ENCODE measurements at regions of chr14 and their contacts with region 1.

Region 1: GRCh38 chr14:88168498-88169165 is 154.4 kb downstream of the KCNK10 start:
- DNase-seq: peak in 3 of 6 donors; percentile 11 to 54 (median 31)
- ATAC-seq: peak; percentile 69 to 95 (median 90)
- H3K4me3 ChIP-seq: no peak overlapping the region
- H3K27ac ChIP-seq: no peak overlapping the region
- H3K4me1 ChIP-seq: no peaks in the 10 kb centered on the region
- H3K27me3 ChIP-seq: no peaks in the 10 kb centered on the region
- CTCF ChIP-seq: peak; percentile 46 to 65 (median 53)

Region 2: GRCh38 chr14:87944987-87945604 is 223.5 kb before region 1 on chr14:
- intact Hi-C with region 1: loop called in 1 of 3 experiments (anchors 10 kb)
- DNase-seq: no peak
- ATAC-seq: peak in 3 of 4 donors; percentile 69 to 82 (median 77)
- H3K4me3 ChIP-seq: no peak overlapping the region
- H3K27ac ChIP-seq: no peak overlapping the region
- H3K4me1 ChIP-seq: no peaks in the 10 kb centered on the region
- H3K27me3 ChIP-seq: no peaks in the 10 kb centered on the region
- CTCF ChIP-seq: peak; percentile 29 to 57 (median 36)

Region 3: DNA sequence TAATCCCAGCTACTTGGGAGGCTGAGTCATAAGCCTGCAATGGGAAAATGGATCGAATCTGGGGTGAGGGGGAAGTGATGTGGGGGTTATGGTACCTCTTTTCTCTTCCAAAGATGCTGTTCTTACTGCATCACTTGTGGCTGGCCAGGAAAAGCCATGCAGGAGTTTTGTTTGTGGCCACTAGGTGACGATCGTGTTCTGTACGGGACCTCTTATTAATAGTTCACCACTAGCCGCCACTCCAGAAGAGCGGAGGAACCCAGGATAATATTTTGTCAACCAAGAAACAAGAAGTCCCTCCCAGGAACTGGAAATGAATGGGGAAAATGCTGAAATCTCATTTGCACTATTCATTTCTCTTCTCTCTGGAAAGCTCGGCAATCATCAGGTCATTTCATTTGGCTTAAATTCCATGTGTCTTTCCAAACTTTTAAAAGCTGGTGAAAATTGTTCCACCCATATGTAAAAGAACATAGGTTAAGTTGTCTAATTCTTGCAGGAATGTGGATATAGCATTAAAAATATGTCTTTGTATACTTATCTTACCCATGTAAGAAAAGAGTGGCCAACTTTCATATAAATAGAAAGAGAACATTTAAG is 154.8 kb before region 1 on chr14:
- intact Hi-C with region 1: loop called in 2 of 3 experiments (anchors 10 kb)
- DNase-seq: peak in 5 of 6 donors; percentile 44 to 79 (median 63)
- ATAC-seq: peak; percentile 92 to 100 (median 99)
- H3K4me3 ChIP-seq: no peak overlapping the region
- H3K27ac ChIP-seq: no peak overlapping the region
- H3K4me1 ChIP-seq: no peaks in the 10 kb centered on the region
- H3K27me3 ChIP-seq: peaks cover 0 to 3% (median 0%) of the 10 kb centered on the region in 4 donors
- CTCF ChIP-seq: peak; percentile 74 to 96 (median 87)